ENCODE measurements at regions of chr10 and their contacts with region 1.

Region 1: DNA sequence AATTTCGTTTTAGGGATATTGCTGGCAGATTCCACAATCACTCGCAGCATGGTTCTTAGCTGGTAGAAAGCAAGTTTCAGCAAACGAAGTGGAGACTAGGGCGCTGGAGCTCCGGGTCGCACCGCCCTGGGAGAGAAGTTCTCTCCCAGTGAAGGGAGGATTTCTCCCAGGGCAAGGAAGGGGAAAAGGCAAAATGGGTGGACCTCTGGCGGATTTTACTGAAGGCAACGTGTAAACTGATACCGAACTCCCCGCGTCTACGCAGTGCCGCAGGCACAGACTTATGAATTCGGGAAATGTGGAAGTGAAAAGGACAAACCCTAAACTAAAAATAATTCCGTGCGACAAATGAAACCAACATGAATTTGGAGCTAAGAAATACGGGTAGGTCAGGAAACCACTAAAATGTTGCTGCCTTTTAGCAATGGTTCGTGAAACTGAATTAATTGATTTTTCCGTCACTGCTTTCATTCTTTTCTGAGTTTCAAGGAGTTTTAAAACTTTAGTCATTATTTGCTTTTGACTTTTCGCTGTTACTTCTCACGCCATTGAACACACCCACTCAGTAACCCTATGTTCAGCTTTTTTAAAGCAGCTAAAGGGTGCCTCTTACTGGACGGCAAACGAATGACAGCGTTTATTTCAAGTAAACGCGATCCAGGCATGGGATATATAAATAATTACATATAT is at the start of gene MYOF:
- DNase-seq: peak; percentile 53
- H3K4me3 ChIP-seq: peak within 1 kb of the TSS; percentile 25 to 67
- H3K27ac ChIP-seq: peak within 1 kb of the TSS; percentile 85 to 88
- H3K4me1 ChIP-seq: peaks cover 3% of the 10 kb centered on the region
- H3K27me3 ChIP-seq: no peaks in the 10 kb centered on the region
- CTCF ChIP-seq: peak; percentile 43 to 61 (median 57)
- POLR2A ChIP-seq: no peak
- total RNA-seq, gene MYOF: 9.4 to 12.3 TPM

Region 2: DNA sequence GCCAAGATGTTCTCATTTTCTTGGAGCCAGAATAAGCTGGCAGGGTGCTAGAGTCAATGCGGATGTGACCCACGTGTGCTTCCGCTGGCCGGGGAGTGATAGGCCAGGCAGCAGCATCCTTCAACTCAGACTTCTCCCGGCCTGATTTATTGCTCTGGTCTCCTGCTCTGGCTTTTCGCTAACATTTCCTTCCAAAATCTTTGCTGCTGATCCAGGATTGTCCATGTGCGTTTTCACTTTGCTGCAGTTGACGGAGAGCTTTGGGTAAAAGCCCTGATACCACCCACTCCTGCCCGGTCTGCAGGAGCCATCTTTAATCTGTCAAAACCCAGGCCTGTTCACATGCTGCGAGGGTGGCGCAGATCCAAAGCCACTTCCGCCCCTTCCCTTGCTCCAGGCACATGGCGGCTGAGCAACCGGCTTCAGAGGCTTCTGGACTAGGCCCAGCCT is 301.8 kb before region 1 on chr10:
- intact Hi-C with region 1: no loop called
- DNase-seq: peak; percentile 33
- H3K4me3 ChIP-seq: peak overlapping the region; percentile 6 to 27
- H3K27ac ChIP-seq: no peak overlapping the region
- H3K4me1 ChIP-seq: no peaks in the 10 kb centered on the region
- H3K27me3 ChIP-seq: no peaks in the 10 kb centered on the region
- CTCF ChIP-seq: no peak
- POLR2A ChIP-seq: no peak

Region 3: GRCh38 chr10:93376372-93377293 is 105.7 kb before region 1 on chr10:
- intact Hi-C with region 1: loop called (anchors 5 kb)
- DNase-seq: peak; percentile 47
- H3K4me3 ChIP-seq: no peak overlapping the region
- H3K27ac ChIP-seq: peak overlapping the region; percentile 62 to 78
- H3K4me1 ChIP-seq: peaks cover 5% of the 10 kb centered on the region
- H3K27me3 ChIP-seq: no peaks in the 10 kb centered on the region
- CTCF ChIP-seq: peak; percentile 90 to 95 (median 94)
- POLR2A ChIP-seq: no peak

Region 4: GRCh38 chr10:93639791-93640190 is 157.5 kb after region 1 on chr10:
- intact Hi-C with region 1: no loop called
- DNase-seq: no peak
- H3K4me3 ChIP-seq: no peak overlapping the region
- H3K27ac ChIP-seq: no peak overlapping the region
- H3K4me1 ChIP-seq: no peaks in the 10 kb centered on the region
- H3K27me3 ChIP-seq: no peaks in the 10 kb centered on the region
- CTCF ChIP-seq: no peak
- POLR2A ChIP-seq: no peak